PC-9 (cell line): ENCODE measurements at regions of chr3 and their contacts with region 1.

Region 1: GRCh38 chr3:94062431-94063404 is at the starts of genes DHFR2 and NSUN3:
- DNase-seq: peak; percentile 95 to 98
- H3K4me3 ChIP-seq: peak within 1 kb of the TSS; percentile 79
- H3K27ac ChIP-seq: peak within 1 kb of the TSS; percentile 93
- H3K4me1 ChIP-seq: peaks cover 19% of the 10 kb centered on the region
- H3K27me3 ChIP-seq: no peaks in the 10 kb centered on the region
- CTCF ChIP-seq: no peak
- total RNA-seq, gene DHFR2: 6.4 and 8.2 TPM in 2 replicates
- total RNA-seq, gene NSUN3: 18.8 and 19.8 TPM in 2 replicates

Region 2: DNA sequence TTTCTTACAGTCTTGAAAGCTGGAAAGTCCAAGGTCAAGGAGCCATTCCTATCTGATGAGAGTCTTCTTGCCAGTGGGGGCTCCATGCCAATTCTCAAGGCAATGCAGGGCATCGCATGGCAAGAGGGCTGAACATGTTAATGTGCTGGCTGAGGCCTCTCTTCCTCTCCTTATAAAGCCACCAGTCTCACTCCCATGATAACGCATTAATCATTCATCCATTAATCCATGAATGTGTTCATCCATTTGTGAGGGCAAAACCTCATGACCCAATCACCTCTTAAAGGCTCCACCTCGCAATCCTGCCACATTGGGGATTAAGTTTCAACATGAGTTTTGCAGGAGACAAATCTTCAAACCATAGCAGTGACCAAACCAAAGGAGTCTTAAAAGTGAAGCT is 207.3 kb before region 1 on chr3:
- CTCF ChIA-PET with region 1: no interaction called
- POLR2A ChIA-PET with region 1: no interaction called
- intact Hi-C with region 1: loop called (anchors 10 kb)
- DNase-seq: no peak
- H3K4me3 ChIP-seq: no peak overlapping the region
- H3K27ac ChIP-seq: no peak overlapping the region
- H3K4me1 ChIP-seq: no peaks in the 10 kb centered on the region
- H3K27me3 ChIP-seq: no peaks in the 10 kb centered on the region
- CTCF ChIP-seq: no peak

Region 3: GRCh38 chr3:93979833-93980676 is 82.7 kb before region 1 on chr3 and contains the start of gene ARL13B:
- CTCF ChIA-PET with region 1: no interaction called
- POLR2A ChIA-PET with region 1: interaction called, 9 read pairs
- intact Hi-C with region 1: loop called (anchors 2 kb)
- DNase-seq: peak; percentile 98 to 100
- H3K4me3 ChIP-seq: peak within 1 kb of the TSS; percentile 74
- H3K27ac ChIP-seq: peak within 1 kb of the TSS; percentile 14; the same call in 1 of the 2 replicates
- H3K4me1 ChIP-seq: peaks cover 14% of the 10 kb centered on the region
- H3K27me3 ChIP-seq: no peaks in the 10 kb centered on the region
- CTCF ChIP-seq: no peak
- total RNA-seq, gene ARL13B: 17.8 and 20.2 TPM in 2 replicates

Region 4: DNA sequence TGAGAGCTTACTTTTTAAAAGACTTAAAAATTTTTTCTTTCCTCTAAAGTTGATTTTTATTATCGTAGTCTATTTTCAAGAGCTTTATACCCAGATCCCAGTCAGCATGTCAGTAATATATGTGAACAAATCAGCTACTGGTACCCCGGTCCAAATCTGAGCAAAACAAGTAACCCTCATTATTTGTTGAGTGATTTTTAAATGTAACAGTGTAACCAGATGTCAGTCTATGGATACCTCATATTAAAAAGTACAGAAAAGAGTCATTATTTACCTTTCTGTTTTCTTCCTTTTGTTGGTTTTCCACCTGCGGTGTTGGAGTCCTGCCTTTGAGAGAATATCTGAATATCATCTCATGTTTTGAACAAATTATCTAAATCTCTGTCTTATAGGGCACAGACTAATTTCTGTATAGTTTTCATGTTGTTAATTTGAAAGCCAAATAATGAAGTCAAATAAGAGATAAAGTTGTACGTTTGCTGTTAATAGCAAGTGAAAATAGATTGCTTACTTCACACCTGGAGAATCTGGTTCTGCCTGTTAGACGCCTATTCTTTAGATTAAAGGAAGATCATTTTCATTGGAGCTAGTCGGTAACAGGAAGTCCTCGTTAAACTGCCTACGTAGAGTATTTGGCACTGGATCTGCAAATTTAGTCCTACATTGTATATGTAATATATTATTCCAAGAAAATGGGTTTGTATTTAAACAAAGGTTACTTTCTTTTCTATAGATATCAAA is 34.5 kb before region 1 on chr3 and contains the start of gene STX19:
- CTCF ChIA-PET with region 1: interaction called, 3 read pairs
- POLR2A ChIA-PET with region 1: interaction called, 6 read pairs
- intact Hi-C with region 1: loop called (anchors 1 kb)
- DNase-seq: peak; percentile 19 to 96
- H3K4me3 ChIP-seq: peak within 1 kb of the TSS; percentile 56
- H3K27ac ChIP-seq: peak within 1 kb of the TSS; percentile 60
- H3K4me1 ChIP-seq: peaks cover 18% of the 10 kb centered on the region
- H3K27me3 ChIP-seq: no peaks in the 10 kb centered on the region
- CTCF ChIP-seq: no peak
- total RNA-seq, gene STX19: 3.4 and 5.5 TPM in 2 replicates

Region 5: DNA sequence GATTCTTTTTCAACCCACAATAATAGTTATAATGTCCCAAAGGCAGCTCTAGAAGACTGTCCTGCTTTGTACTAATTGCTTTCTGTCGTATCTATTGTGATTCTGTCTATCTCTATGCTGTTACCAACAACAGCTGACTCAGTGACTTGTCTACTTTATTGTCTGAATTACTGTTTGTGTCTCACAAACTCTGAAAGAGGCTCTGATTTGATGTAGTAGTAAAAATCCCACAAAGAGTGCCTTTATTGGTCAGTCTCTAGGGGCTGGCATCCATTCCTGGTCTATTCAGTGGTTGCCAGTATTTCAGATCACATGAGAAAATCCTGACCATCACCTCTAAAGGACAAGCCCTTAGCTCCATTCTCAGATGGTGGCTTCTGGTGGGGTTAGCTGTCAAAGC is 254.3 kb after region 1 on chr3:
- CTCF ChIA-PET with region 1: no interaction called
- POLR2A ChIA-PET with region 1: no interaction called
- intact Hi-C with region 1: no loop called
- DNase-seq: no peak
- H3K4me3 ChIP-seq: no peak overlapping the region
- H3K27ac ChIP-seq: no peak overlapping the region
- H3K4me1 ChIP-seq: no peaks in the 10 kb centered on the region
- H3K27me3 ChIP-seq: no peaks in the 10 kb centered on the region
- CTCF ChIP-seq: no peak